Activated T-helper 2 cell treated with anti-CD3 and anti-CD28 coated beads, Interferon-gamma antibody, Interleukin-2, Interleukin-4, amounts not matched to agents 10 μg/mL and 5 μg/mL and 100 μg/mL, durations not matched to agents 14 hours and 24 hours and 36 hours (primary cell): ENCODE measurements at regions of chr3 and their contacts with region 1.

Region 1: GRCh38 chr3:142987080-142987700 is 14.2 kb upstream of the U2SURP start:
- DNase-seq: no peak
- H3K4me3 Mint-ChIP-seq: no peak overlapping the region
- H3K27ac Mint-ChIP-seq: no peak overlapping the region
- H3K4me1 Mint-ChIP-seq: peaks cover 4% of the 10 kb centered on the region
- H3K27me3 Mint-ChIP-seq: peaks cover 21% of the 10 kb centered on the region

Region 2: GRCh38 chr3:142828703-142829305 is 158.4 kb before region 1 on chr3:
- intact Hi-C with region 1: loop called (anchors 1 kb)
- DNase-seq: peak; percentile 50
- H3K4me3 Mint-ChIP-seq: no peak overlapping the region
- H3K27ac Mint-ChIP-seq: no peak overlapping the region
- H3K4me1 Mint-ChIP-seq: no peaks in the 10 kb centered on the region
- H3K27me3 Mint-ChIP-seq: peaks cover 25% of the 10 kb centered on the region

Region 3: GRCh38 chr3:142929109-142929508 is 58.1 kb before region 1 on chr3:
- intact Hi-C with region 1: loop called (anchors 2 kb)
- DNase-seq: peak; percentile 16
- H3K4me3 Mint-ChIP-seq: no peak overlapping the region
- H3K27ac Mint-ChIP-seq: no peak overlapping the region
- H3K4me1 Mint-ChIP-seq: no peaks in the 10 kb centered on the region
- H3K27me3 Mint-ChIP-seq: peaks cover 25% of the 10 kb centered on the region

Region 4: DNA sequence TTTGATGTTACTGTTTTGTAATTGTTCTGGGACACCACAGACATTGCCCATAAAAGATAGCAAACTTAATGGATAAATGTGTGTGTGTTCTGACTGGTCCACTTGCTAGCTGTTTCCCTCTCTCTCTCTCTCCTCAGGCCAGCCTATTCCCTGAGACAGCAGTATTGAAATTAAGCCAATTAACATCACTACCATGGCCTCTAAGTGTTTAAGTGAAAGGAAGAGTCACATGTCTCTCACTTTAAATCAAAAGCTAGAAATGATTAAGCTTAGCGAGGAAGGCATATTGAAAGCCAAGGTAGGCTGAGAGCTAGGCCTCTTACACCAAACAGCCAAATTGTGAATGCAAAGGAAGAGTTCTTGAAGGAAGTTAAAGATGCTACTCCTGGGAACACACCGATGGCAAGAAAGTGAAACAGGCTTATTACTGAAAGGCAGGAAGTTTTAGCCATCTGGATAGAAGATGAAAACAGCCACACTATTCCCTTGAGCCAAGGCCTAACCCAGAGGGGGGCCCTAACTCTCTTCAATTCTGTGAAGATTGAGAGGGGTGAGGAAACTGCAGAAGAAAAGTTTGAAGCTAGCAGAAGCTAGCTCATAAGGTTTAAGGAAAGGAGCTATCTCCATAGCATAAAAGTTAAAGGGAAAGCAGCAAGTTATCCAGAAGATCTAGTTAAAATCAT is 427.5 kb after region 1 on chr3:
- intact Hi-C with region 1: no loop called
- DNase-seq: no peak
- H3K4me3 Mint-ChIP-seq: no peak overlapping the region
- H3K27ac Mint-ChIP-seq: no peak overlapping the region
- H3K4me1 Mint-ChIP-seq: peaks cover 6% of the 10 kb centered on the region
- H3K27me3 Mint-ChIP-seq: peaks cover 5% of the 10 kb centered on the region